H1 (cell line): ENCODE measurements at regions of chr19 and their contacts with region 1.

Region 1: GRCh38 chr19:11881151-11881800 is 6.3 kb upstream of the ZNF69 start:
- DNase-seq: peak; percentile 47 to 83
- H3K4me3 ChIP-seq: no peak overlapping the region
- H3K27ac ChIP-seq: no peak overlapping the region
- H3K4me1 ChIP-seq: no peaks in the 10 kb centered on the region
- H3K27me3 ChIP-seq: no peaks in the 10 kb centered on the region; a peak in 2 of 7 replicates
- CTCF ChIP-seq: peak; percentile 71 to 88 (median 75)
- EP300 ChIP-seq: no peak
- POLR2A ChIP-seq: no peak
- RAD21 ChIP-seq: peak; percentile 92 to 93

Region 2: GRCh38 chr19:11708457-11708856 is 172.8 kb before region 1 on chr19:
- CTCF ChIA-PET with region 1: no interaction called
- POLR2A ChIA-PET with region 1: no interaction called
- DNase-seq: no peak
- H3K4me3 ChIP-seq: no peak overlapping the region
- H3K27ac ChIP-seq: no peak overlapping the region
- H3K4me1 ChIP-seq: no peaks in the 10 kb centered on the region
- H3K27me3 ChIP-seq: no peaks in the 10 kb centered on the region
- CTCF ChIP-seq: no peak
- EP300 ChIP-seq: no peak
- POLR2A ChIP-seq: no peak
- RAD21 ChIP-seq: no peak

Region 3: GRCh38 chr19:11798391-11799330 is 82.6 kb before region 1 on chr19 and contains the start of gene ZNF491:
- CTCF ChIA-PET with region 1: interaction called, 32 read pairs
- POLR2A ChIA-PET with region 1: interaction called, 5 read pairs
- DNase-seq: peak; percentile 75 to 94
- H3K4me3 ChIP-seq: peak within 1 kb of the TSS; percentile 49 to 80 (median 76)
- H3K27ac ChIP-seq: no peak within 1 kb of the TSS
- H3K4me1 ChIP-seq: peaks cover 0 to 9% (median 6%) of the 10 kb centered on the region in 4 experiments; a peak in 5 of 7 replicates
- H3K27me3 ChIP-seq: peaks cover 0 to 10% (median under 1%) of the 10 kb centered on the region in 4 experiments; a peak in 2 of 7 replicates
- CTCF ChIP-seq: peak; percentile 38 to 43 (median 38)
- EP300 ChIP-seq: no peak
- POLR2A ChIP-seq: peak in 1 of 2 experiments; percentile 44; a peak in 1 of 3 replicates
- RAD21 ChIP-seq: peak in 1 of 2 experiments; percentile 38; a peak in 3 of 4 replicates
- total RNA-seq, gene ZNF491: 0.78 and 0.84 TPM in 2 replicates

Region 4: GRCh38 chr19:11848594-11849469 is 32.4 kb before region 1 on chr19 and contains the start of gene ZNF439:
- CTCF ChIA-PET with region 1: interaction called, 10 read pairs
- POLR2A ChIA-PET with region 1: no interaction called
- DNase-seq: peak; percentile 23 to 46
- H3K4me3 ChIP-seq: peak within 1 kb of the TSS in 2 of 4 experiments; percentile 17 to 25; a peak in 1 of 8 replicates
- H3K27ac ChIP-seq: no peak within 1 kb of the TSS
- H3K4me1 ChIP-seq: no peaks in the 10 kb centered on the region
- H3K27me3 ChIP-seq: no peaks in the 10 kb centered on the region
- CTCF ChIP-seq: no peak
- EP300 ChIP-seq: no peak
- POLR2A ChIP-seq: no peak
- RAD21 ChIP-seq: no peak
- total RNA-seq, gene ZNF439: 0.17 TPM in 1 of 2 replicates, not detected in the other

Region 5: DNA sequence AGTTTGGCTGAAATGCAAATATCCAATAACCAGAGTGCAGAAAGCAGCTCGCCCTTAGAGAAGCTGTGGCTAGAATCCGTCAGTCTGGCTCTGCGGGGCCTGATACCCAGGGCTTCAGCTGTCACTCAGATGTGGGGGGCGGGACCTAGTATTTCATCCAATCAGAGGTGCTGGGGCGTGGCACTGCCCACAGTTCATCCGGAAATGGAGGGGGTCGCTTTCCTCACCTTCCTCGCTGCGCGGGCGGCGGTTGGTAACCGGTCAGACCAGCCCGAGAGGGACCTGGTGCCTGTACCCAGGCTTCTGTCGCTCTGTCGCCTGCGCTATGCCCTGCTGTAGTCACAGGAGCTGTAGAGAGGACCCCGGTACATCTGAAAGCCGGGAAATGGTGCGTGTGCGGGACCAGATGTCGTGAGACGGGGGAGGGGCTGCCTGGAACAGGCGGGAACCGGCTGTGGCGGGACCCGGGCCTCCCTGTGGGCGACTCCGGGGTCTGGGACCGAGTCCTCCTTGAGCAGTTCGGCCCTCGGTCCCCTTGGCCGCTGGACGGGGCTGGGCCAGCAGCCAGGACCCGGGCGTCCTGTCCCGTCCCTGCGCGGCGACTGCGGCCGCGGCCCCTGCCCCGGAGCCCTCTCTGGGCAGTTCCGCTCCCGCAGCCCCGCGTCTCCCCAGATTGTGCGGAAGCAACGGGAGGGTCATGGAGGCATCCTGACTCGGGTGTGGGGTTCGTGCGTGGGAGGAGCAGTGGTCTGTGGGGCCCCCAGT is 43.8 kb after region 1 on chr19 and contains the start of gene ZNF700:
- CTCF ChIA-PET with region 1: interaction called, 69 read pairs
- POLR2A ChIA-PET with region 1: interaction called, 7 read pairs
- DNase-seq: peak; percentile 56 to 95
- H3K4me3 ChIP-seq: peak within 1 kb of the TSS; percentile 65 to 82 (median 76)
- H3K27ac ChIP-seq: peak within 1 kb of the TSS; percentile 95
- H3K4me1 ChIP-seq: peaks cover 0 to 3% (median 3%) of the 10 kb centered on the region in 4 experiments; a peak in 4 of 7 replicates
- H3K27me3 ChIP-seq: 0 out of 7 replicates have a peak, but pooled peaks cover 0 to 3% (median 0%) of the 10 kb centered on the region in 4 experiments
- CTCF ChIP-seq: no peak
- EP300 ChIP-seq: 0 out of 3 replicates have a peak, but pooled peaks of 1 of the 2 experiments have one; percentile 17
- POLR2A ChIP-seq: peak; percentile 91 to 98
- RAD21 ChIP-seq: no peak
- total RNA-seq, gene ZNF700: 9.4 and 10.5 TPM in 2 replicates

Region 6: GRCh38 chr19:11931051-11931450 is 49.8 kb after region 1 on chr19:
- CTCF ChIA-PET with region 1: interaction called, 10 read pairs
- POLR2A ChIA-PET with region 1: no interaction called
- DNase-seq: no peak
- H3K4me3 ChIP-seq: no peak overlapping the region
- H3K27ac ChIP-seq: no peak overlapping the region
- H3K4me1 ChIP-seq: no peaks in the 10 kb centered on the region
- H3K27me3 ChIP-seq: no peaks in the 10 kb centered on the region
- CTCF ChIP-seq: no peak
- EP300 ChIP-seq: no peak
- POLR2A ChIP-seq: no peak
- RAD21 ChIP-seq: no peak

Region 7: DNA sequence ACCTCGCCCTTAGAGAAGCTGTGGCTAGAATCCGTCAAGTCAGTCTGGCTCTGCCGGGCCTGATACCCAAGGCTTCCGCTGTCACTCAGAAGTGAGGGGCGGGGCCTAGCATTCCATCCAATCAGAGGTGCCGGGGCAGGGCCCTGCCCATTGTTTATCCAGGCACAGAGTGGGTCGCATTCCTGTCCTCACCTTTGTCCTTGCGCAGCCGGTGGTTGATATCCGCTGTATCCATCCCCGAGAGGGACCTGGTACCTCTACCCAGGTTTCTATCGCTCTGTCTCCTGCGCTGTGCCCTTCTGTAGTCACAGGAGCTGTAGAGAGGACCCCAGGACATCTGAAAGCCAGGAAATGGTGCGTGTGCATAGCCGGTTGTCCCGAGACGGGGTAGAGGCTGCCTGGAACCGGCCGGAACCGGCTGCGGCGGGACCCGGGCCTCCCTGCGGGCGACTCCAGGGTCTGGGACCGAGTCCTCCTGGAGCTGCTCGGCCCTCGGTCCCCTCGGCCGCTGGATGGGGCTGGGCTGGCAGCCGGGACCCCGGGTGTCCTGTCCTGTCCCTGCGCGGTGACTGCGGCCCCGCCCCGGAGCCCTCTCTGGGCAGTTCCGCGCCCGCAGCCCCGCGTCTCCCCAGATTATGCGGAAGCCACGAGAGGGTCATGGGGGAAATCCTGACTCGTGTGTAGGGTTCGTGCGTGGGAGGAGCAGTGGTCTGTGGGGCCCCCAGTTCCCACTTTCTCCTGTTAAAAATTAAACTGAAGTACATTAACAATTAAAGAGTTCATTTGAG is 83.8 kb after region 1 on chr19 and contains the start of gene ZNF763:
- CTCF ChIA-PET with region 1: interaction called, 22 read pairs
- POLR2A ChIA-PET with region 1: interaction called, 3 read pairs
- DNase-seq: peak; percentile 89 to 96
- H3K4me3 ChIP-seq: peak within 1 kb of the TSS; percentile 66 to 76 (median 72)
- H3K27ac ChIP-seq: peak within 1 kb of the TSS; percentile 75; the same call in 1 of the 2 replicates
- H3K4me1 ChIP-seq: peaks cover 0 to 7% (median 4%) of the 10 kb centered on the region in 4 experiments; a peak in 5 of 7 replicates
- H3K27me3 ChIP-seq: peaks cover 0 to 13% (median 7%) of the 10 kb centered on the region in 4 experiments; a peak in 5 of 7 replicates
- CTCF ChIP-seq: no peak
- EP300 ChIP-seq: no peak
- POLR2A ChIP-seq: peak; percentile 71 to 91
- RAD21 ChIP-seq: no peak; a peak in 2 of 4 replicates
- total RNA-seq, gene ZNF763: 1.7 TPM in 2 replicates

Region 8: GRCh38 chr19:12035220-12036153 is 154.2 kb after region 1 on chr19 and contains the start of gene ZNF433:
- CTCF ChIA-PET with region 1: interaction called, 10 read pairs
- POLR2A ChIA-PET with region 1: interaction called, 5 read pairs
- DNase-seq: peak; percentile 76 to 99
- H3K4me3 ChIP-seq: peak within 1 kb of the TSS; percentile 58 to 81 (median 80)
- H3K27ac ChIP-seq: peak within 1 kb of the TSS; percentile 76; the same call in 1 of the 2 replicates
- H3K4me1 ChIP-seq: peaks cover 0 to 4% (median 2%) of the 10 kb centered on the region in 4 experiments; a peak in 3 of 7 replicates
- H3K27me3 ChIP-seq: peaks cover 0 to 7% (median 2%) of the 10 kb centered on the region in 4 experiments; a peak in 3 of 7 replicates
- CTCF ChIP-seq: peak in 1 of 3 experiments; percentile 11; a peak in 1 of 4 replicates
- EP300 ChIP-seq: peak in 1 of 2 experiments; percentile 69; a peak in 1 of 3 replicates
- POLR2A ChIP-seq: peak in 1 of 2 experiments; percentile 80; a peak in 2 of 3 replicates
- RAD21 ChIP-seq: no peak
- total RNA-seq, gene ZNF433: 1.4 and 1.8 TPM in 2 replicates